Activated T-helper 2 cell treated with anti-CD3 and anti-CD28 coated beads, Interferon-gamma antibody, Interleukin-2, Interleukin-4, amounts not matched to agents 10 μg/mL and 5 μg/mL and 100 μg/mL, durations not matched to agents 14 hours and 24 hours and 36 hours (primary cell): ENCODE measurements at regions of chr4 and their contacts with region 1.

Region 1: GRCh38 chr4:11439836-11440235 is 11.1 kb upstream of the HS3ST1 start:
- DNase-seq: no peak
- H3K4me3 Mint-ChIP-seq: no peak overlapping the region
- H3K27ac Mint-ChIP-seq: no peak overlapping the region
- H3K4me1 Mint-ChIP-seq: no peaks in the 10 kb centered on the region
- H3K27me3 Mint-ChIP-seq: no peaks in the 10 kb centered on the region

Region 2: DNA sequence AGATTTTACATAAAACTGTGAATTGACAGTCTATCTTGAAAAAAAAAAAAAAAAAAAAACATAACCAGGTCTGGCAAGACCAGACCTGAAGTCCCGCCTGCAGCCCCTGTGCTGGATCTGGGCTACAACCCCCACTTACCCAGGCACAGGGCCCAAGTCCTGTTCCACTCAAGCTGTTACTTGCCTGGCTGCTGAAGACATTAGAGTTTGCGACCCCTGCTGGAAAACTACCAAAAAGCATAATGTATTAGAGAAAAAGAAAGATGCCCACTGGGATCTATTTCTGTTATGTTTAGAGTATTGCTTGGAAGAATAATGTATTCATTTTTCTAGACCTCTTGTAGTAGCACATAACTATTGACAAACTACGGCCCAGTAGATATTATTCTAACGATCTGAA is 15.8 kb before region 1 on chr4:
- intact Hi-C with region 1: no loop called
- DNase-seq: no peak
- H3K4me3 Mint-ChIP-seq: no peak overlapping the region
- H3K27ac Mint-ChIP-seq: no peak overlapping the region
- H3K4me1 Mint-ChIP-seq: peaks cover 16% of the 10 kb centered on the region
- H3K27me3 Mint-ChIP-seq: peaks cover 43% of the 10 kb centered on the region

Region 3: GRCh38 chr4:11487876-11488544 is 48.2 kb after region 1 on chr4:
- intact Hi-C with region 1: loop called (anchors 5 kb)
- DNase-seq: no peak
- H3K4me3 Mint-ChIP-seq: no peak overlapping the region
- H3K27ac Mint-ChIP-seq: no peak overlapping the region
- H3K4me1 Mint-ChIP-seq: peaks cover 32% of the 10 kb centered on the region
- H3K27me3 Mint-ChIP-seq: peaks cover 2% of the 10 kb centered on the region

Region 4: DNA sequence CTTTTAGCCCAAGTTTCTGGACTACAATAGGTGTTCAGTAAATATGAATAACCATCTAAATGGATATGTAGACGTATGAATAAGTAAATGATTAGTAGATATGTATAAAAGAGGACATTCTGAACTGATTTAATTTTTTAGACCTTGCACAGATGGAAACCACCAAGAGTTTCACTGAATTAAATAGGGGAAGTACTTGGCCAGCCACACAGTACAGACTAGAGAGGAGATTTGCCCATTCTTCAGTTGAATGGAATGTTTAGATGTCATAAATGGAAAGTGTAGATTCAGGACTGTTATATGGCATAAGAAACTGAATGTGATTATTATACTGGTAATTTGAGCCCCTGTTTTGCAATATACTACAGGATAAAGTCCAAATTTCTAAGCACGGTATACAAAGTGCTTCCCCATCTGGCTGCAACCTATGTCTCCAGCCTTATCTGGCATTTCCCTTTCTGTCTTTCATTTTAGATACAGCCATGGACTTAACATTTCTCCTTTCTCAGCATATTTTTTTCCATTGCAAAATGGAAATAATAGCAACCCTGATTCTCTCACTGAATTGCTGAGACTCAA is 126.7 kb after region 1 on chr4:
- intact Hi-C with region 1: no loop called
- DNase-seq: no peak
- H3K4me3 Mint-ChIP-seq: no peak overlapping the region
- H3K27ac Mint-ChIP-seq: no peak overlapping the region
- H3K4me1 Mint-ChIP-seq: no peaks in the 10 kb centered on the region
- H3K27me3 Mint-ChIP-seq: no peaks in the 10 kb centered on the region